IMR-90 (cell line): ENCODE measurements at regions of chr18 and their contacts with region 1.

Region 1: GRCh38 chr18:56575819-56576663 is 62.4 kb downstream of the TXNL1 start:
- DNase-seq: peak; percentile 71
- ATAC-seq: peak; percentile 80
- H3K4me3 ChIP-seq: no peak overlapping the region
- H3K27ac ChIP-seq: no peak overlapping the region
- H3K4me1 ChIP-seq: peaks cover 10% of the 10 kb centered on the region
- H3K27me3 ChIP-seq: no peaks in the 10 kb centered on the region
- CTCF ChIP-seq: peak; percentile 77
- POLR2A ChIP-seq: peak; percentile 44; the same call in 1 of the 2 replicates
- RAD21 ChIP-seq: peak; percentile 87

Region 2: GRCh38 chr18:54983041-54983686 is 1592.9 kb before region 1 on chr18:
- CTCF ChIA-PET with region 1: no interaction called
- POLR2A ChIA-PET with region 1: no interaction called
- dilution Hi-C with region 1: no loop called
- in situ Hi-C with region 1: no loop called
- intact Hi-C with region 1: loop called (anchors 10 kb)
- DNase-seq: peak; percentile 76
- ATAC-seq: peak; percentile 90
- H3K4me3 ChIP-seq: no peak overlapping the region
- H3K27ac ChIP-seq: no peak overlapping the region
- H3K4me1 ChIP-seq: no peaks in the 10 kb centered on the region
- H3K27me3 ChIP-seq: no peaks in the 10 kb centered on the region
- CTCF ChIP-seq: peak; percentile 83
- POLR2A ChIP-seq: no peak
- RAD21 ChIP-seq: peak; percentile 89

Region 3: DNA sequence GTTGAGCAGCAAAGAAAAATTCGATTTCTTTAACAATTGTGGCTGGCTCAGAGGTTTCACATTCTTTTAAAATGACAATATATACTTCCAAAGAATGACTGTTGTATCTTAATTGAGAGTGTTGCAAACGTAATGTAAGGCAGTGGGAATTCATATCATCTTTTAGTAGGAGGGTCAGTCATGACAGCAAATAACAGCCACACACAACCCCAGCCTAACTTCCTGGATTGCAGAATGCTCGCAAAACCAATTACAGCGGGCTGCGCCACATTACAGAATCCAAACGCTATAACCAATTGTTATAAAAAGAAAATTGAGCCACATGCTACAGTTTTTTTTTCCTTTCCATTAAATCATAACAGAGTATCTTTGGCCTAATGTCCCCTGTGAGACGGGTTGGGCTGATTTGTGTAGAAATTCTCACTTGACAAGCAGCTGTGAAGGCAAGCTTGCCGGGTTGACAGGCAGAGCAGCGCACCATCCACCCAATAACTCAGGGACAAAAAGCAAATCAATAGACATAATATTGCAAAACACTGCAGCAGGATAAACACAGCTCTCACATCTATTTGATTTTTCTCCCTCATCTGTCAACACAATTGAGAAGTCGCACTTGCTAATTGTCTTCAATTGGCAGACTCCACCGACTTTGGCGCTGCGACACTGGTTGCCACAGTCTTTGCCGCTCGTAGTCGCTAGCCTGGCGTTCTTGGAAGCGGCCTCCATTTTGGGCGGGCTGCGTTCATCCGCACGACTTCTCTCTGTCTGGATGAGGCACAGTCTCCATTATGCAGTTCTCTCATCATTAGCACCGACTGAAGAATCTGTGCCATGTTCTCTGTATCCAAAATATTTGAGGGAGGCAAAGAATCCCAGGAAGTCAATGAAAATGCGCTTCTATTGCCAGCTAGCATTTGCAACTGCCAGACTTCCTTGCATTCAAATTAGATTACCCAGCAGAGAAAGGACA is 1521.7 kb before region 1 on chr18:
- CTCF ChIA-PET with region 1: no interaction called
- POLR2A ChIA-PET with region 1: no interaction called
- dilution Hi-C with region 1: no loop called
- in situ Hi-C with region 1: no loop called
- intact Hi-C with region 1: no loop called
- DNase-seq: peak; percentile 2
- ATAC-seq: no peak
- H3K4me3 ChIP-seq: no peak overlapping the region
- H3K27ac ChIP-seq: no peak overlapping the region
- H3K4me1 ChIP-seq: no peaks in the 10 kb centered on the region
- H3K27me3 ChIP-seq: peaks cover 2% of the 10 kb centered on the region
- CTCF ChIP-seq: no peak
- POLR2A ChIP-seq: no peak
- RAD21 ChIP-seq: no peak

Region 4: GRCh38 chr18:55234366-55235093 is 1341.5 kb before region 1 on chr18:
- CTCF ChIA-PET with region 1: no interaction called
- POLR2A ChIA-PET with region 1: no interaction called
- dilution Hi-C with region 1: no loop called
- in situ Hi-C with region 1: no loop called
- intact Hi-C with region 1: loop called (anchors 1 kb)
- DNase-seq: peak; percentile 79
- ATAC-seq: peak; percentile 92
- H3K4me3 ChIP-seq: no peak overlapping the region
- H3K27ac ChIP-seq: no peak overlapping the region
- H3K4me1 ChIP-seq: no peaks in the 10 kb centered on the region
- H3K27me3 ChIP-seq: no peaks in the 10 kb centered on the region
- CTCF ChIP-seq: peak; percentile 88
- POLR2A ChIP-seq: no peak
- RAD21 ChIP-seq: peak; percentile 95

Region 5: DNA sequence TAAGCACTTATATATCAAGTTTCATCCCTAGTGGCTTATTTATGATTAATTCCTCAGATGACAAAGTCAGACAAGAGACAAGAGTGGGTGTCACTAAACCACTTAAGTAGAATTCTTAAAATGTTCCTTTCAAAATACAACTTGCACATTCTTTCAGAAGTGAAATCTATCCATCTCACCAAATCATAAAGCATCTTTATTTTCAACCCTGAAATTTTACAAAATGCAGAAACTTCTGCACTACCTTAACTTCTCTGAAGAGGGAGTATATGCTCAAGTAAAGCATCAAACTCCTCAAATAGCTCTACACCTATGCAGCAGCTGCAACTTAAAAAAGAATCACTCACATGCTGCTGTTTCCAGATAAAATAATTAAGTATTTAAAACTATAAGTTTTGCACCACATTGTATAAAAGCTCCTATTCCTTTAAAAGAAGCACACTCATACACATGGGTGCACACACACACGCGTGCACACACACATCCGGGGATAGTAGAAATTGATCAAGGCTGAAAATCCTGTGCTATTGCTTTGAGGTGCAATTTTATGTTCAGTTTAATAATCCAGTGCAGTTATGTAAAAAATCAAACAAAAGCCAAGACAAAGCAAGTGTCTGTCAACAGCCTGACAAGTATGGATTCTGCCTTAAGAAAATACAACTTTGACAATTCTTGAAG is 1232.5 kb before region 1 on chr18:
- CTCF ChIA-PET with region 1: no interaction called
- POLR2A ChIA-PET with region 1: no interaction called
- dilution Hi-C with region 1: no loop called
- in situ Hi-C with region 1: no loop called
- intact Hi-C with region 1: loop called (anchors 5 kb)
- DNase-seq: peak; percentile 64
- ATAC-seq: peak; percentile 84
- H3K4me3 ChIP-seq: no peak overlapping the region
- H3K27ac ChIP-seq: no peak overlapping the region
- H3K4me1 ChIP-seq: peaks cover 10% of the 10 kb centered on the region
- H3K27me3 ChIP-seq: no peaks in the 10 kb centered on the region
- CTCF ChIP-seq: peak; percentile 65
- POLR2A ChIP-seq: no peak
- RAD21 ChIP-seq: peak; percentile 80

Region 6: GRCh38 chr18:55781481-55781957 is 794.5 kb before region 1 on chr18:
- CTCF ChIA-PET with region 1: interaction called, 3 read pairs
- POLR2A ChIA-PET with region 1: no interaction called
- dilution Hi-C with region 1: no loop called
- in situ Hi-C with region 1: loop called (anchors 10 kb)
- intact Hi-C with region 1: loop called (anchors 2 kb)
- DNase-seq: peak; percentile 77
- ATAC-seq: peak; percentile 63
- H3K4me3 ChIP-seq: no peak overlapping the region
- H3K27ac ChIP-seq: no peak overlapping the region
- H3K4me1 ChIP-seq: no peaks in the 10 kb centered on the region; the same call in 1 of the 2 replicates
- H3K27me3 ChIP-seq: no peaks in the 10 kb centered on the region
- CTCF ChIP-seq: peak; percentile 80
- POLR2A ChIP-seq: no peak
- RAD21 ChIP-seq: peak; percentile 87

Region 7: DNA sequence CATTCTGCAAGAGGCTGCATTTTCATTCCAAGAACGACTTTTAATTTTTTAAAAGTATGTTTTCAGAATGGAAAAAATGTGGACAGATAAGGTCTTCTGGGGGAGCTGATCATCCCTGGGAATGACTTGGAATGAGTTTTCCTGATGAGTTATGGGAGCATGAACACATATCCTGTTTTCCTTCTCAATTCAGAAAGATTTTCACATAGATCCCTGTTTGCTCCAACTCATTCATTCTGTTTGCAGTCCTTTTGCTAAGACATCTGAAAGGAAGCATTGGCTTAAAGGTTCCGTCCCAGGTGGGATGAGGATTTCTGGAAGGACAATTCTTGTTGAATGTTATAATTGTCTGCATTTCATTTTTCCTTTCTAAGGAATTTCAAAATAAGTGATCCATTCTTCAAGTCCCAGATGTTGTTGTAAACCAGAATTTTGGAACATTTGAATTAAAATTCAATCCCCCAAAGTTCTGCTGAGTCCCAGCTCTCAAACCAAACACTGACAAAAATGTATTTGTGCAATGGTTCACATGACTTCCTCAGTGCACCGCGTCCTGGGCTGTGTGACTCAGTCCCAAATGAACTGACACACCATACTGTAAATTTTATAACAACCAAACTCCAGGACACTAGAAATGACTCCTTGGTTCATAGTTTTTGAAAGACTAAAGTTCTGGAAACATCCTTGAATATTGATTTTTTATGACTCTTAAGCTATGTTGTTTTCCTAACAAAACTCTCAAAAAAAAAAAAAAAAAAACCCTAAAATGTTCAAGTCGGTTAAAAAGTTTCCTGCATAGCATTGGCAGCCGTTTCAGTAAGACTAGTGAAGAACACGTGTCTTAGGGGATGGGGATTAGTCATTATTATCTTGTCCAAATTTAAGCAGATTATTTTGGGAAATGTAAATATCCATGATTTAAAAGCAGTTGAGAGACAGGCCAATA is 706.2 kb before region 1 on chr18:
- CTCF ChIA-PET with region 1: no interaction called
- POLR2A ChIA-PET with region 1: no interaction called
- dilution Hi-C with region 1: no loop called
- in situ Hi-C with region 1: no loop called
- intact Hi-C with region 1: loop called (anchors 5 kb)
- DNase-seq: peak; percentile 61
- ATAC-seq: peak; percentile 73
- H3K4me3 ChIP-seq: no peak overlapping the region
- H3K27ac ChIP-seq: no peak overlapping the region
- H3K4me1 ChIP-seq: peaks cover 9% of the 10 kb centered on the region; the same call in 1 of the 2 replicates
- H3K27me3 ChIP-seq: no peaks in the 10 kb centered on the region
- CTCF ChIP-seq: no peak
- POLR2A ChIP-seq: no peak
- RAD21 ChIP-seq: no peak

Region 8: GRCh38 chr18:56168049-56168781 is 407.8 kb before region 1 on chr18:
- CTCF ChIA-PET with region 1: no interaction called
- POLR2A ChIA-PET with region 1: no interaction called
- dilution Hi-C with region 1: no loop called
- in situ Hi-C with region 1: no loop called
- intact Hi-C with region 1: loop called (anchors 10 kb)
- DNase-seq: peak; percentile 91
- ATAC-seq: peak; percentile 88
- H3K4me3 ChIP-seq: no peak overlapping the region; the same call in 1 of the 2 replicates
- H3K27ac ChIP-seq: peak overlapping the region; percentile 100
- H3K4me1 ChIP-seq: peaks cover 20% of the 10 kb centered on the region
- H3K27me3 ChIP-seq: no peaks in the 10 kb centered on the region
- CTCF ChIP-seq: no peak
- POLR2A ChIP-seq: no peak
- RAD21 ChIP-seq: no peak